ENCODE measurements at regions of chr2 and their contacts with region 1.

Region 1: GRCh38 chr2:209423562-209424198 is at the start of gene MAP2:
- DNase-seq: peak; percentile 73 to 98 (median 86)

Region 2: GRCh38 chr2:209495855-209496585 is 72.3 kb after region 1 on chr2:
- intact Hi-C with region 1: no loop called
- DNase-seq: no peak

Region 3: GRCh38 chr2:209577376-209578357 is 154.0 kb after region 1 on chr2:
- intact Hi-C with region 1: loop called (anchors 5 kb)
- DNase-seq: no peak

Region 4: DNA sequence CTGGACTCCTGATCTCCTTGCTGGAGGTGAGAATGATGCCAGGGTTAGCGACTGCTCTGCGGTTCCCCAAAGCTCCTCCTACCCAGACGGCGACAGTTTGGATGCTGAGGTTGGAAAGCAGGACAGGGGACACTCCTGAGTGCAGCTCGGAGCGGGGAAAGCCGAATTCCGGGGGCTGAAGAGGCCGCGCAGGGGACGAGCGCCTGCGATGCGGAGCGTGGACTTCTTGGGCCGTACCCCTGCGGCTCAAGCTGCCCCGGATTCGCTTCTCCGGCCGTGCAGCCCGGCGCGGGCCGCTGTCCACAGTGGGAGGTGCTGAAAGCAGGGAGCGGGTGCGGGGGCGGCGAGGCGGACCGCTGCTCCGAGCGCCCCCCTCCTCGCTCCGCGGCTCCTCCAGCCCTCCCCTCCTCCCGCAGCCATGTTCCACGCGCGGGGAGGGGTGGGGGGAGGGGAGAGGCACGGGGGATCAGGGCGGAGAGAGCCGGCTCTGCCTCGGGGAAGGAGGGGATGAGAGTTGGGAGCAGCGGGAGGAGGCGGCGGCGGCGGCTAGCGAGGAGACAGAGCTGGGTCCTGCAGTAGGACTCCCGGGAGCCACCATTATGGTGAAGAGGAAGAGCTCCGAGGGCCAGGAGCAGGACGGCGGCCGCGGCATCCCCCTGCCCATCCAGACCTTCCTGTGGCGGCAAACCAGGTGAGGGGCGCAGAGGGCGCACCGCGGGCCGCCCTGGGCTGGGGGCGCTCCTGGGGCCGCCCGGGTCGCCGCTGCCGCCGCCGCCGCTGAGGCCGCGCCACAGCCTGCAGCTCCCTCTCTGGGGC is 348.0 kb after region 1 on chr2 and contains the start of gene UNC80:
- intact Hi-C with region 1: loop called (anchors 10 kb)
- DNase-seq: peak; percentile 44 to 94 (median 70)